GM18951 (cell line): ENCODE measurements at regions of chr5 and their contacts with region 1.

Region 1: GRCh38 chr5:178732281-178732680 is 1.8 kb upstream of the ZNF354A start:
- POLR2A ChIP-seq: no peak

Region 2: DNA sequence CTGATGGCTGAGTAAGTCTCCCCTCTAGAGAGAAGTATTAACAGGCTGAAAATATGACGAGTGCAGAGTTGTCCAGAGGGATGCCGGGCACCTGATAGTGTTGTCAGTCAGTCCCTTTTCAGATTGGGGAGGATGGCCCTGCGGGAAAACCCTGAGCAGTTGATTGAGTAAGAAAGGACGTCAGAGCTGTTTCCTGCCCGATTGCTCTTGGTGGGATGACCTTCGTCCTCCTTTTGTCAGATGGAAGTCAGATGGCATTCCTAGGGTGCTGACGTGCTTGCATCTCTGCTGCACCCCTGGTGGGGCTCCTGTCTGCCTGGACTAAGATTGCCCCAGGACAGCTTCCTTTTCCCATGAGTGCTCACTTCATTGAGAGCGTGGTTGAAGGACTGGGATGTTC is 137.3 kb after region 1 on chr5:
- in situ Hi-C with region 1: loop called (anchors 5 kb)
- POLR2A ChIP-seq: no peak